Adrenal gland (tissue), 19 donors: ENCODE measurements at regions of chr2 and their contacts with region 1.

Region 1: GRCh38 chr2:138581909-138582308 is 80.3 kb downstream of the SPOPL start:
- DNase-seq: no peak
- H3K4me3 ChIP-seq: no peak overlapping the region
- H3K27ac ChIP-seq: no peak overlapping the region
- H3K4me1 ChIP-seq: no peaks in the 10 kb centered on the region
- H3K27me3 ChIP-seq: no peaks in the 10 kb centered on the region
- CTCF ChIP-seq: no peak
- POLR2A ChIP-seq: no peak

Region 2: DNA sequence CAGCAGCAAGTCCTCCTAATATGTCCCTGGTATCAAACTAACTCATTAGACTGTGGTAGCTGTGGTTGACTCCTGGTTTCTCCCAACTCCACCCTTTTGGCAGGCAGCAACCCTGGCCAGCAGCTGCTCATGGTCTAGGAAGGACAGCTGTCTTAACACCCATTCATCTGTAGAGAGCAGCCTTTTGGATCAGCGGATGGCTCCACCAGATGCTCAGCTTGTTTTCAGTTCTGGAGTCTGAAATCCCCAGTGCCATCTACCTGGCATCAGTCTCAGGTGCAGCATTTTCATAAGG is 20.2 kb after region 1 on chr2:
- intact Hi-C with region 1: loop called in 1 of 2 experiments (anchors 2 kb)
- DNase-seq: no peak
- H3K4me3 ChIP-seq: no peak overlapping the region
- H3K27ac ChIP-seq: no peak overlapping the region
- H3K4me1 ChIP-seq: no peaks in the 10 kb centered on the region
- H3K27me3 ChIP-seq: no peaks in the 10 kb centered on the region
- CTCF ChIP-seq: no peak
- POLR2A ChIP-seq: no peak

Region 3: DNA sequence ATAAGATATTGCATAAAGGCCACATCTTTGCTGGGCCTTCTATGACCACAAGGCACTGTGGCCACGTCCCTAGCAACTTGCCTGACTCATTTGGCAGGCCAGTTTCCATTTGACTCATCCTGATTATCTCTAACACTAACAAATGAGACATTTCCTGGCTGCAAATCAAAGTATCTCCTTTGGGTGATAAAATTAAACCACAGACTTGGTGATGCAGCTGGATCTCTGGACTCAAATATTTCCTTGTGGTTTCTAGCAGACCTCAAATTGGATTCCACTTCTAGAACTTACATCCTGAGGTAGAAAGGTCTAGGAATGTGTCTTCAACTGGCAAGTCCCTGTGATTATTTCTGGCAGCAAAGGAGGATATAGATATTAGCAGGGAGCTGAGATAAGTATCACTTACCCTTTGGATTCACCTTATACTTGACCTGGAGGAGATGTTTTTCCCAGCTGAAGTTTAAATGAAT is 366.2 kb after region 1 on chr2:
- intact Hi-C with region 1: no loop called
- DNase-seq: peak; percentile 26 to 71 (median 52)
- H3K4me3 ChIP-seq: no peak overlapping the region
- H3K27ac ChIP-seq: no peak overlapping the region
- H3K4me1 ChIP-seq: no peaks in the 10 kb centered on the region
- H3K27me3 ChIP-seq: no peaks in the 10 kb centered on the region
- CTCF ChIP-seq: no peak
- POLR2A ChIP-seq: no peak